ENCODE measurements at regions of chr10 and their contacts with region 1.

Region 1: DNA sequence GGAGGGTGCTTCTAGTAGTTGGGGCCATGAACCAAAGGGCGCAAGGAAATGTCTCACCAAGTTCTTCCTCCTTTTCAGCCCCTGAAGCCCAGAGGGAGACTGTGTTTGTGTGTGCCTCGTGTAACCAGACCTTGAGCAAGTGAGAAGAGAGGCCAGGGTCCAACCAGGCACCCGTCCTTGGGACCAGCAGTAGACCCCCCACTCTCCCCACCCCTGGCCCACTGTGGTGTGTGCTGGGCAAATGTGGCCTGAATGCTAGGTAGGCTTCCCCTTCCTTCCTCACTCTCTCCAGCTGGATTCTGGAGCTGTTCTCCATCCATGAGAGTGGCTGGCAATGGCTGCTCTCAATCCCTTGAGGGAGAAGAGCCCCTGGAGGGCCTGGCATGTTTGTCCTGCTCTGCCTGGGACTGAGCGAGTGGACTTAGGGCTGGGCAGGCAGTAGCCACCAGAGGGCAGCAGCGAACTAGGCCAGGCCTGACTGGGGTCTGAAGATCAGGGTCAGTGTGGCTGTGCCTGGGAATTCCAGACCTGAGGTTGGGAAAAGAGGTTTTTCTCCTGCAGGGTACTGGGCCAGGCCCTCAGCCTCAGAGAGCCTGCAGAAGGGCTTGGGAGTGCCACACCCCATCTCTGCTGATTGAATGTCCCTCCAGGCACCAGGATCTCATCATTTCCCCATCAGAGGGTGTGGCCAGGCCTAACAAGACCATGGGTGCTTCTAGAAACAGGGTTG is 12.5 kb downstream of the SFRP5 start:
- DNase-seq: peak; percentile 64 to 89 (median 87)
- ATAC-seq: peak; percentile 74 to 81
- H3K4me3 ChIP-seq: no peak overlapping the region
- H3K27ac ChIP-seq: no peak overlapping the region
- H3K4me1 ChIP-seq: no peaks in the 10 kb centered on the region
- H3K27me3 ChIP-seq: no peaks in the 10 kb centered on the region

Region 2: GRCh38 chr10:97037365-97038361 is 721.7 kb before region 1 on chr10:
- intact Hi-C with region 1: no loop called
- DNase-seq: peak; percentile 76 to 89 (median 87)
- ATAC-seq: peak; percentile 90 to 93
- H3K4me3 ChIP-seq: peak overlapping the region; percentile 46
- H3K27ac ChIP-seq: no peak overlapping the region
- H3K4me1 ChIP-seq: peaks cover 4% of the 10 kb centered on the region
- H3K27me3 ChIP-seq: no peaks in the 10 kb centered on the region

Region 3: GRCh38 chr10:97869091-97870042 is 110.0 kb after region 1 on chr10:
- intact Hi-C with region 1: loop called (anchors 2 to 10 kb)
- DNase-seq: peak; percentile 82 to 92 (median 91)
- ATAC-seq: peak; percentile 92 to 93
- H3K4me3 ChIP-seq: no peak overlapping the region
- H3K27ac ChIP-seq: peak overlapping the region; percentile 6
- H3K4me1 ChIP-seq: no peaks in the 10 kb centered on the region
- H3K27me3 ChIP-seq: no peaks in the 10 kb centered on the region

Measured in right cardiac atrium (tissue), 5 donors.